IMR-90 (cell line): ENCODE measurements at regions of chr15 and their contacts with region 1.

Region 1: DNA sequence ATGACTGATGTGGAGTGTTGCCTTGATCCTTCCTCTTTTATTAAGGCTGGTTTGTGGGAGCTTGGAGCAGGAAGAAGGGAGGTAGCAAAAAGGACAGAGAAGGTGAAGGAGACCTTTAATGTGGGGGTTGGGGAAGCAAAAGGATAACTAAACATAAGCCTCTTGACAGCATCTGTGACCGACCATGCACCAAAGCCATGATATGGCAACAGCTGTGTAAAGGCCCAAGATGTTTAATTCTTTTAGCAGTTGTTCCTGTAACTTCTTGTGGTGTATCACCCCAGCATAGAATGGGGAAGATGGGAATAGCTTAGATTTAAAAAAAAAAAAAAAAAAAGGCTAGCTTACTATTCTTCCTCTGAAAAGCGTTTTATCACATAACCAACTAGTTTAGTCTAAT is 194.7 kb downstream of the KLHL25 start:
- DNase-seq: no peak
- ATAC-seq: no peak
- H3K4me3 ChIP-seq: no peak overlapping the region
- H3K27ac ChIP-seq: no peak overlapping the region
- H3K4me1 ChIP-seq: peaks cover 3% of the 10 kb centered on the region; the same call in 1 of the 2 replicates
- H3K27me3 ChIP-seq: no peaks in the 10 kb centered on the region
- CTCF ChIP-seq: no peak
- POLR2A ChIP-seq: no peak
- RAD21 ChIP-seq: no peak

Region 2: GRCh38 chr15:85689729-85690128 is 89.7 kb after region 1 on chr15:
- CTCF ChIA-PET with region 1: no interaction called
- POLR2A ChIA-PET with region 1: interaction called, 10 read pairs
- dilution Hi-C with region 1: no loop called
- in situ Hi-C with region 1: no loop called
- intact Hi-C with region 1: no loop called
- DNase-seq: peak; percentile 72
- ATAC-seq: peak; percentile 94
- H3K4me3 ChIP-seq: peak overlapping the region; percentile 33
- H3K27ac ChIP-seq: peak overlapping the region; percentile 79
- H3K4me1 ChIP-seq: peaks cover 2% of the 10 kb centered on the region; the same call in 1 of the 2 replicates
- H3K27me3 ChIP-seq: no peaks in the 10 kb centered on the region
- CTCF ChIP-seq: no peak
- POLR2A ChIP-seq: no peak
- RAD21 ChIP-seq: no peak